Aorta (tissue), 5 donors: ENCODE measurements at regions of chr22 and their contacts with region 1.

Region 1: GRCh38 chr22:31107178-31107893 is at the start of gene SELENOM:
- DNase-seq: peak; percentile 98 to 99
- ATAC-seq: peak; percentile 91
- H3K4me3 ChIP-seq: peak within 1 kb of the TSS; percentile 53 to 90
- H3K27ac ChIP-seq: peak within 1 kb of the TSS; percentile 58 to 98
- H3K4me1 ChIP-seq: no peaks in the 10 kb centered on the region
- H3K27me3 ChIP-seq: no peaks in the 10 kb centered on the region
- total RNA-seq, gene SELENOM: 368 to 526 TPM

Region 2: GRCh38 chr22:31089160-31090100 is 17.9 kb before region 1 on chr22:
- intact Hi-C with region 1: loop called in 1 of 2 experiments (anchors 2 kb)
- DNase-seq: peak in 1 of 2 donors; percentile 74
- ATAC-seq: peak; percentile 23
- H3K4me3 ChIP-seq: no peak overlapping the region
- H3K27ac ChIP-seq: peak overlapping the region in 1 of 2 donors; percentile 63
- H3K4me1 ChIP-seq: no peaks in the 10 kb centered on the region
- H3K27me3 ChIP-seq: no peaks in the 10 kb centered on the region

Region 3: GRCh38 chr22:31148953-31149627 is 41.8 kb after region 1 on chr22:
- intact Hi-C with region 1: loop called (anchors 2 to 5 kb)
- DNase-seq: peak; percentile 80 to 86
- ATAC-seq: peak; percentile 95
- H3K4me3 ChIP-seq: no peak overlapping the region
- H3K27ac ChIP-seq: peak overlapping the region; percentile 89 to 97
- H3K4me1 ChIP-seq: peaks cover 0 to 3% of the 10 kb centered on the region in 2 donors
- H3K27me3 ChIP-seq: no peaks in the 10 kb centered on the region

Region 4: GRCh38 chr22:31230871-31231621 is 123.7 kb after region 1 on chr22:
- intact Hi-C with region 1: loop called (anchors 5 kb)
- DNase-seq: no peak
- ATAC-seq: peak; percentile 78
- H3K4me3 ChIP-seq: no peak overlapping the region
- H3K27ac ChIP-seq: no peak overlapping the region
- H3K4me1 ChIP-seq: no peaks in the 10 kb centered on the region
- H3K27me3 ChIP-seq: no peaks in the 10 kb centered on the region